H1 (cell line): ENCODE measurements at regions of chr20 and their contacts with region 1.

Region 1: GRCh38 chr20:57582432-57583305 is 21.8 kb downstream of the PCK1 start:
- DNase-seq: peak in 1 of 2 experiments; percentile 63
- H3K4me3 ChIP-seq: no peak overlapping the region
- H3K27ac ChIP-seq: no peak overlapping the region
- H3K4me1 ChIP-seq: peaks cover 0 to 2% (median 0%) of the 10 kb centered on the region in 4 experiments; a peak in 1 of 7 replicates
- H3K27me3 ChIP-seq: peaks cover 0 to 2% (median 0%) of the 10 kb centered on the region in 4 experiments; a peak in 2 of 7 replicates
- CTCF ChIP-seq: peak; percentile 65 to 85 (median 69)
- EP300 ChIP-seq: no peak
- POLR2A ChIP-seq: no peak
- RAD21 ChIP-seq: peak; percentile 37 to 53; a peak in 3 of 4 replicates

Region 2: GRCh38 chr20:57391074-57391554 is 191.6 kb before region 1 on chr20 and contains the start of gene RBM38:
- CTCF ChIA-PET with region 1: no interaction called
- POLR2A ChIA-PET with region 1: no interaction called
- DNase-seq: peak in 1 of 2 experiments; percentile 86
- H3K4me3 ChIP-seq: peak within 1 kb of the TSS; percentile 60 to 94 (median 72)
- H3K27ac ChIP-seq: peak within 1 kb of the TSS; percentile 31; the same call in 1 of the 2 replicates
- H3K4me1 ChIP-seq: peaks cover 5 to 27% (median 18%) of the 10 kb centered on the region in 4 experiments
- H3K27me3 ChIP-seq: peaks cover 0 to 10% (median 4%) of the 10 kb centered on the region in 4 experiments; a peak in 4 of 7 replicates
- CTCF ChIP-seq: no peak
- EP300 ChIP-seq: no peak
- POLR2A ChIP-seq: peak in 1 of 2 experiments; percentile 22; a peak in 1 of 3 replicates
- RAD21 ChIP-seq: no peak
- total RNA-seq, gene RBM38: 57.7 and 60.1 TPM in 2 replicates

Region 3: GRCh38 chr20:57514273-57514751 is 68.4 kb before region 1 on chr20:
- CTCF ChIA-PET with region 1: interaction called, 55 read pairs
- POLR2A ChIA-PET with region 1: no interaction called
- DNase-seq: peak in 1 of 2 experiments; percentile 71
- H3K4me3 ChIP-seq: no peak overlapping the region
- H3K27ac ChIP-seq: no peak overlapping the region
- H3K4me1 ChIP-seq: peaks cover 2 to 11% (median 3%) of the 10 kb centered on the region in 4 experiments; a peak in 5 of 7 replicates
- H3K27me3 ChIP-seq: no peaks in the 10 kb centered on the region
- CTCF ChIP-seq: peak; percentile 54 to 95 (median 80)
- EP300 ChIP-seq: no peak
- POLR2A ChIP-seq: no peak
- RAD21 ChIP-seq: peak; percentile 96 to 99

Region 4: DNA sequence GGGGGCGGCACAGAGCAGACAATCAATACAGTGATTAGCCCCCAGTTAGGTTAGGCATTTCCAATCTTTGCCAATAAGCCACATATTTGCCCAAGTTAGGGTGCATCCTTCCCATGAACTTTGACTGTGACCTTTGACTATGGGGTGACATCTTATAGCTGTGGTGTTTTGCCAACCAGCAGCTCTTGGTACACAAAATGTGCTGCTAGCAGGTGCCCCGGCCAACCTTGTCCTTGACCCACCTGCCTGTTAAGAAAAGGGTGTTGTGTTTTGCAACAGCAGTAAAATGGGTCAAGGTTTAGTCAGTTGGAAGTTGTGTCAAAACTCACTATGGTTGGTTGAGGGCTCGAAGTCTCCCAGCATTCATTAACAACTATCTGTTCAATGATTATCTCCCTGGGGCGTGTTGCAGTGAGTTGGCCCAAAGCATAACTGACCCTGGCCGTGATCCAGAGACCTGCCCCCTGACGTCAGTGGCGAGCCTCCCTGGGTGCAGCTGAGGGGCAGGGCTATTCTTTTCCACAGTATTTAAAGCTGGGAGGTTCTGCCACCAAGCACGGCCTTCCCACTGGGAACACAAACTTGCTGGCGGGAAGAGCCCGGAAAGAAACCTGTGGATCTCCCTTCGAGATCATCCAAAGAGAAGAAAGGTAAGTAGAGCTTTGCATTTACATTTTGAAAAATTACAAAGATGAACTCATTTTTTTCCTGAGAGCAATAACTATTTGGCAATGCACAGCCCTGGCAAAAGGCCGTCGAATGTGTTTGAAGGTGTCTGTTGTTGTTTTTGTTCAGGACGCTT is 21.9 kb before region 1 on chr20 and contains the start of gene PCK1:
- CTCF ChIA-PET with region 1: interaction called, 22 read pairs
- POLR2A ChIA-PET with region 1: no interaction called
- DNase-seq: no peak
- H3K4me3 ChIP-seq: no peak within 1 kb of the TSS
- H3K27ac ChIP-seq: no peak within 1 kb of the TSS
- H3K4me1 ChIP-seq: no peaks in the 10 kb centered on the region
- H3K27me3 ChIP-seq: no peaks in the 10 kb centered on the region
- CTCF ChIP-seq: no peak
- EP300 ChIP-seq: no peak
- POLR2A ChIP-seq: no peak
- RAD21 ChIP-seq: no peak
- total RNA-seq, gene PCK1: not detected in 2 replicates

Region 5: DNA sequence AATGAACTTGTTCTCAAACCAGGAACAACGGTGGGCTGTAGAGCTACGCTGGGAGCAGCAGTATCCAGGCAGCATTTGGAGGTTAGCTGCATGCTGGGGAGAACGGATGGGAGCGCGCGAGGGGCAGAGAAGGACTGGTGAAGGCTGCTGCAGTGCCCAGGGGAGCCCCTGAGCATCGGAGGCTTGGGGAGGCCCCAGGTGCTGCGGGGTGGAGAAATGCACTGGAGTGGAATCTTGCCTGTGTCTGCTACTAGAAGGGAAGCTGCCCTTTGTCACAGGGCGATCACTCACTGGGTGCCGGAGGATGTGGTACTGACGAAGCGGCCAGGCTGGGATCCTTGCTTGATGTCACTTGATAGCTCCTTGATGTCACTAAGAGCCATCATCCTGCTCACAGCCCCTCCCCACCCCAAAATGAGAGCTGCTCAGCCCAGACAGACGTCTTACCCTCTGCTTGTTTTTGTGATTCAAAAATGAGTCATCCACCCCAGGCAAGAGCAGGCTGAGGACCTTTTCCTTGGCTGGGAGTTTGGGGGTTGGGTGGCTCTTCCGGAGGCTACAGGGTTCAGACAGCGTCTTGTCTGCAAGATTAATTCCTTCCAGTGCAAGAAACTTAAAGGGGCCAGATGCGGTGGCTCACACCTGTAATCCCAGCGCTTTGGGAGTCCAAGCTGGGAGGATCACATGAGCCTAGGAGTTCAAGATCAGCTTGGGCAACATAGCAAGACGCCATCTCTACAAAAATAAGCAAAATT is 189.8 kb after region 1 on chr20:
- CTCF ChIA-PET with region 1: no interaction called
- POLR2A ChIA-PET with region 1: no interaction called
- DNase-seq: peak in 1 of 2 experiments; percentile 53
- H3K4me3 ChIP-seq: no peak overlapping the region; a peak in 1 of 8 replicates
- H3K27ac ChIP-seq: no peak overlapping the region
- H3K4me1 ChIP-seq: peaks cover 0 to 5% (median 3%) of the 10 kb centered on the region in 4 experiments; a peak in 3 of 7 replicates
- H3K27me3 ChIP-seq: no peaks in the 10 kb centered on the region
- CTCF ChIP-seq: no peak
- EP300 ChIP-seq: no peak
- POLR2A ChIP-seq: no peak
- RAD21 ChIP-seq: no peak